ENCODE measurements at regions of chr3 and their contacts with region 1.

Region 1: DNA sequence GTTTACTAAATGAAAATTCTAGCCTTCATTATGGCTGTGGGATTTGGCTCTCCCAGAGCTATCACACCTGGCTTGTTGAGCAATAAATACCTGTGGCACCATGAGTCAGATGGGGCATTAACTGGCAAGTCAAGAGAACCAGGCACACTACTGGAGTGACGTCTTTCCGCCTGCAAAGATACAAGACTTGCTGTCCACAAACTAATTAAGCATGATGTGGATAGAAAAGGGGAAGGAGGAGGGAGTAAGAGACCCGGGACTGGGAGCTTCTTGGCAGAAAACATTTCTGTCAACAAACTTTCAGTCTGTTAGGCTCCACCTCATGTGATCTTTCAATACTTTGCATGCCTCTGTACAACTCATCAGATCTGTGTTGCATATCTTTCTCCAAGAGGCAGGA is 56.5 kb downstream of the CLDN1 start:
- DNase-seq: peak; percentile 97
- H3K4me3 Mint-ChIP-seq: no peak overlapping the region
- H3K27ac Mint-ChIP-seq: peak overlapping the region; percentile 82
- H3K4me1 Mint-ChIP-seq: peaks cover 24% of the 10 kb centered on the region
- H3K27me3 Mint-ChIP-seq: no peaks in the 10 kb centered on the region
- CTCF ChIP-seq: no peak

Region 2: DNA sequence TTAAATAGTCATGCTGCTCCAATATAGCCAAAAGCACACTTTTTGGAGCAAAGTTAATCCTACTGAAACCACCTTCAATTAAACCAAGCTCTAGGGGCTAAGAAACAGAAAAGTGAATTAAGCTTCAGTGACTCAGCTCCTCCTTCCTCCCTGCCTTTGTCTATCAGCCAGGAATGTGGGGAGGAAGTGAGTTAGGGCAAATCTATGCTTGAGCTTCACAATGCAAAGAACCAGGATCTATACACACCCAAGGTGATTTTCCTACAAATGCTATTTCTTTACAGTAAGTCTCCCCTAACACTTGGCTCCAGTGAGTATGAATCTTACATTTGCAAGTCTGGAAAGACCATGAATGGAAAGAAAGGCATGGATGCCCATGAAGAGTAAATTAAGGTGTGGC is 357.1 kb before region 1 on chr3:
- CTCF ChIA-PET with region 1: no interaction called
- POLR2A ChIA-PET with region 1: no interaction called
- intact Hi-C with region 1: no loop called
- DNase-seq: peak; percentile 86
- H3K4me3 Mint-ChIP-seq: no peak overlapping the region
- H3K27ac Mint-ChIP-seq: peak overlapping the region; percentile 80
- H3K4me1 Mint-ChIP-seq: peaks cover 33% of the 10 kb centered on the region
- H3K27me3 Mint-ChIP-seq: no peaks in the 10 kb centered on the region
- CTCF ChIP-seq: no peak

Region 3: DNA sequence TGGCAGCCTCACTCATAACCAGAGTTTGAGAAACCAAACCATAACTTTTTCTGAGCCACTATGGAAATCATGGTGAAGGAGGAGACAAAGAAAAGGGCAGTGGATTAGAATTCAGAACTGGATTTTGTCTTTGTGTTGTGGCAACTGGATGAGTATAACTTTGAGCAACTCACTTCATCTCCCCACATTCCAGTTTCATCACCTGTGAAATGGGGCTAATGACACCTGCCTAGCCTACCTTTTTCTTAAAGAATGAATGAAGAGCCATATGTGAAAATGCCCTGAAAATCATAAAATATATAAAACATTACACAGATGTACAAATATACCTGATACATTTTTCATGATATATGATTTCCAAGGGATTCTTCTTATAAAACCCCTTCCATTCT is 35.4 kb before region 1 on chr3:
- CTCF ChIA-PET with region 1: interaction called, 32 read pairs
- POLR2A ChIA-PET with region 1: interaction called, 32 read pairs
- intact Hi-C with region 1: loop called (anchors 1 kb)
- DNase-seq: no peak
- H3K4me3 Mint-ChIP-seq: peak overlapping the region; percentile 57
- H3K27ac Mint-ChIP-seq: peak overlapping the region; percentile 81
- H3K4me1 Mint-ChIP-seq: peaks cover 38% of the 10 kb centered on the region
- H3K27me3 Mint-ChIP-seq: no peaks in the 10 kb centered on the region
- CTCF ChIP-seq: no peak

Region 4: DNA sequence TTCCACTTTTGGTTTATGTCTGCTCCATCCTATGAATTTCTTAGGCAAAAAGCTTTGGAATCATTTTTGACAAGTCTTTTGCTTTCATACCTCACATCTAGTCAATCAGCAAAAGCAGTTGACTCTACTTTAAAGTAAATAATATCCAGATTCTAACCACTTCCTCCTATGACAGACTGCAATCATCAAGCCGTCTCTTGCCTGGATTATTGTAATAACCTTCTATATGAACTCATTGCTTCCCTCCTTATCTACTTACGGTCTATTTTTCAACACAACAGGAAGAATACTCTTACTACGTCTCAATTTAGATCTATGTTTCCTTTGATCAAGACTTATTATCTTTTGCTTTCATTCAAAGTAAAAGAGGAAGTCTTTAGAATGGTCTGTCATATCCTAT is 35.8 kb after region 1 on chr3:
- CTCF ChIA-PET with region 1: interaction called, 5 read pairs
- POLR2A ChIA-PET with region 1: interaction called, 91 read pairs
- intact Hi-C with region 1: loop called (anchors 5 kb)
- DNase-seq: no peak
- H3K4me3 Mint-ChIP-seq: no peak overlapping the region
- H3K27ac Mint-ChIP-seq: peak overlapping the region; percentile 47
- H3K4me1 Mint-ChIP-seq: peaks cover 20% of the 10 kb centered on the region
- H3K27me3 Mint-ChIP-seq: no peaks in the 10 kb centered on the region
- CTCF ChIP-seq: no peak

Region 5: DNA sequence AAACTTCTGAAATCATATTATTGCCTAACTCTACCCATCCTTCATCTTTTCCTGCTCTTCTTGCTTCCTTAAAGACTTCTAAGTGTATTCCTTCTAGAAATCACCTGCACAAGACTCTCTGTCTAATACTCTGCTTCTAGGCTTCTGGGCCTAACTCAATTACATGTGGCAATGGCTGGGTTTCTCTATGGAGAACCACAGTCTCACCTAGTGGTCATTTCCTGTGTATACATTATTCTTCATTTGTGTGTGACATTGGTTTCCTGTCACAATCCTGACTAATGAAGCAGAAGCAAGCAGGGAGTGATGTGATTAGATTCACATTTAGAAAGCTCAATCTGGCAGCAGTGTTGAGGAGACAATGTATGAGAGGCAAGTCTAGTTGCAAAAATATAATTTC is 73.3 kb after region 1 on chr3:
- CTCF ChIA-PET with region 1: no interaction called
- POLR2A ChIA-PET with region 1: interaction called, 15 read pairs
- intact Hi-C with region 1: no loop called
- DNase-seq: peak; percentile 51
- H3K4me3 Mint-ChIP-seq: no peak overlapping the region
- H3K27ac Mint-ChIP-seq: peak overlapping the region; percentile 55
- H3K4me1 Mint-ChIP-seq: peaks cover 37% of the 10 kb centered on the region
- H3K27me3 Mint-ChIP-seq: no peaks in the 10 kb centered on the region
- CTCF ChIP-seq: peak; percentile 17

Region 6: GRCh38 chr3:190378240-190378891 is 112.6 kb after region 1 on chr3:
- CTCF ChIA-PET with region 1: interaction called, 4 read pairs
- POLR2A ChIA-PET with region 1: interaction called, 13 read pairs
- intact Hi-C with region 1: no loop called
- DNase-seq: peak; percentile 98
- H3K4me3 Mint-ChIP-seq: no peak overlapping the region
- H3K27ac Mint-ChIP-seq: peak overlapping the region; percentile 2
- H3K4me1 Mint-ChIP-seq: peaks cover 55% of the 10 kb centered on the region
- H3K27me3 Mint-ChIP-seq: no peaks in the 10 kb centered on the region
- CTCF ChIP-seq: no peak

Measured in MCF 10A (cell line).